ENCODE measurements at regions of chr1 and their contacts with region 1.

Region 1: DNA sequence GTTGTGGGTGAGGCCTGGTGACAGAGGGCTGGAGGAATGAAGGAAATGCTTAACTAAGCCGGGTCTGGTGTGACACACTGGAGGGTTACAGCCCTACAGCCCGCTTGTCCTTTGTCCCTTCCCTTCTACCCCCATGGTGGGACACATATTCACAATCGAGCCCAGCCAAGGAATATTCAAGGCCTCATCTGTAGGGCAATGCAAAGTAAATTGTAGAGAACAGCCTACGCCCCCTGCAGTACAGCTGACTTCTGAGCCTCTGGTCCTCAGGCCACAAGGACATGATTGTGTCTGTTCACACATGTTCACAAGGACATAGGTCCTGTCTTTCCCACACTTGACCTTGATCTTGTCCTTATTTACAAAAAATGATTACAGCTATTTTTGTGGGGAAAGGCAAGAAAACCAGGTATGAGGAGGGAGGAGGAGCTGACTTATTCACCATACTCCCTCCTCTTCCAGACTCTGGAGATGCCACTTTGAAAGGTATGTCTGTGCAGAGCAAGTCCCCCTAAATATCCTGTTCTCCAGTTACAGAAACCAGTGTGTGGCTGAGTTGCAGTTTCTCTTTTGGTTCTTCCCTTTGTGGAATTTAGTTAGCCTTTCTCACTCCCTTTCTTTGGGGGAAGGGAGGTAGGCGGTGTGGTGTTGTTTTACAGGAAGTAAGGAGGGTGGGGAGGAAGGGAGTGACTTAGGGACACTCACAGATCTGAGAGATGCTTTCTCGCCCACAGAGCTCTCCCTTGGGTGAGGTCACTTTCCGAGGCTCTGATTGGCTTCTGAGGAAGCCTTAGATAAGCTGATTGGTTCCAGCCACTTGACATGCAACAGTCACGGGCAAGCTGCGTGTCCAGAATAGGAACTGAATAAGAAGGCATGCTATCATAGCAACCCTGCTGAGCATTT is 14.6 kb downstream of the POLR3GL start:
- DNase-seq: peak; percentile 90

Region 2: GRCh38 chr1:145996433-145997015 is 17.4 kb after region 1 on chr1 and contains the start of gene TXNIP:
- CTCF ChIA-PET with region 1: interaction called, 13 read pairs
- POLR2A ChIA-PET with region 1: interaction called, 115 read pairs
- DNase-seq: peak; percentile 99

Region 3: DNA sequence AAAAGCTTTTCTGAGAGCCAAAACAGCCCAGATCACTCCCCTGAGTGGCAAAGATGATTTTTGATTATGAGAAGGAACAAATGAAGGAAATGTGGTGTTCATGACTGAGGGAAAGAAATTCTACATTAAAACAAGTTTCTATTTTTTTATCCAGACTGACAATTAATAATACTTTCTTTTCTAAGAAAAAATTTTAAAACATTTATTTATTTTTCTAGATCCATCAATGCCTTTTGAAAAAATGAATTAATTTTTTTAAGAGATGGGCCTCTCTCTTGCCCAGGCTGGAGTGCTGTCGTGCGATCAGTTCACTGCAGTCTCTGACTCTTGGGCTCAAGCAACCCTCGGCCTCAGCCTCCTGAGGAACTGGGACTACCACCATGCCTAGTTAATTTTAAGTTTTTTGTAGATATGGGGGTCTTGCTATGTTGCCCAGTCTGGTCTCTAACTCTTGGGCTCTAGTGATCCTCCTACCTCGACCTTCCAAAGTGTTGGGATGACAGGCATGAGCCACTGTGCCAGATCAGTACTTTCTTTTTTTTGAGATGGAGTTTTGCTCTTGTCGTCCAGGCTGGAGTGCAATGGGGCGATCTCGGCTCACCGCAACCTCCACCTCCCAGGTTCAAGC is 28.5 kb after region 1 on chr1:
- CTCF ChIA-PET with region 1: interaction called, 42 read pairs
- POLR2A ChIA-PET with region 1: interaction called, 10 read pairs
- DNase-seq: no peak

Region 4: DNA sequence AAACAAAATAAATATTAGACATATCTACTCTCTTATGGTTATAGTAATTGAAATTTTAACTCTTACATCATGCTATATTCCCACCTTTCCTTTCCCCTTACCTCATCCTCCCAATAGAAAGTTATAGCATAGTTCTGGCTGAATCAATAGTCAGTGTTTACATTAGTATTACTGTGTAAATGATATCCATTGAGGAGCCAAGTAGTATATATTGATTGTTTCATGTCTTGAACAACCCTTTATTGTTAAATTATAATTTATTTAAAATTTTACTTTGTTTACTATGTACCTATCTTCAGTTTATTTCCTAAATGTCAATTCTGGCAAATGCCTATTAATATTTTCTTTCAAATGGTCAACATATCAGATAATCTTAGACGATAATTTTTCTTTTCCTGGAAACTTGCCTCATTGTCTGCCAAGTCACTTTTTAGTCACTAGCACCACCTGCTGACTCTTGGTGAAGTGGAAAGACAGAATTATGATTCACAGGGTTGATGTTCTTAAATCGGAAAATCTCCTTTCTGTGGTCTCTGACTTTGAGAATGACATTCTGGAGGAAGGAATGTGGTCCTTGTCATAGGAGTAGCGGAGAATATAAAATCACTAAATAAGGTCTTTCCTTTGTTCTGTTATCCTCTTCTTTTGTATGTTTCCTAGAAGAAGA is 33.8 kb after region 1 on chr1:
- CTCF ChIA-PET with region 1: interaction called, 12 read pairs
- POLR2A ChIA-PET with region 1: interaction called, 4 read pairs
- DNase-seq: peak; percentile 65

Region 5: DNA sequence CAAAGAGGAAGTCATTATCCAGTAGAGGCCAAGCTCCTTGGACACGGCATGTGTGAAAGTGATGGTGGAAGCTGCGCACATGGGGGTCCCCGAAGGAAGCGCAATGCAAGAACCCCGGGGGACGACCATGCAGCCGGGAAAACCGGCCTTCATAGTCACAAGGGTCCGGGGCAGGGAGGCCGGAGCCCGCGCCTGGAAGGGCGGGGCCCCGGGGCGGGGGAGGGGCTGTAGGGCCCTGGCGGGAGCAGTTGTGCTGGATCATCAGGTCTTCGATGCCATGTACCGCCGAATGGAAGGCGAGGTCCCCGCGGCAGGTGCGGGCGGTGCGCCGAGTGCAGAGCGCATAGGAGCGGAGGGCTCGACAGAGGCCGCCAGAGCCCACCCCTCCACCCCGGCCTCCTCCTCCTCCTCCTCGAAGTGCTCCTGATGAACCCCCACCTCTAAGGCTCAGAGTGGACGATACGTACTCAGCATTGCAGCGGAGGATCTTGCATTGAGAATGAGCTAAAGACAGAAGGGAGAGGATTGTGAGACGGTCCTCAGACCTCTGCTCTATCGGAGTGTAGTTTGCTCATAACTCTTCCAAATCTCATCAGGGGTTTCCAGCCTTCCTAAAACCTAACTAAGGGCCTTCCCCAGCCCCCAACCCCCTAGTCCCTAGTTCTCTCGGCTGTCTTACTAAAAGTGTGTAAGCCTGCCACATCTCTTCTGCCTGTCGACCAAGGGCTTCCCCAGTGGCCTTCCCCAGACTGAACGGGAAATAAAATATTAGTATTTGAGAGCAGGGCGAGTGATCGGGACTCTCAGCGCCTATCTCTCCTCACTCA is 40.3 kb after region 1 on chr1:
- CTCF ChIA-PET with region 1: interaction called, 12 read pairs
- POLR2A ChIA-PET with region 1: interaction called, 4 read pairs
- DNase-seq: no peak

Measured in HEK293T (cell line).